Activated T-helper 1 cell treated with anti-CD3 and anti-CD28 coated beads, Interleukin-12 subunit alpha, Interleukin-12 subunit beta, Interleukin-2, Interleukin-4 antibody, amounts not matched to agents 30 ng/mL and 10 ng/mL and 1 ng/mL, durations not matched to agents 14 hours and 24 hours and 36 hours (primary cell): ENCODE measurements at regions of chr13 and their contacts with region 1.

Region 1: GRCh38 chr13:29850224-29850898 is at the start of gene UBL3:
- DNase-seq: peak; percentile 90
- H3K4me3 Mint-ChIP-seq: peak within 1 kb of the TSS; percentile 97
- H3K27ac Mint-ChIP-seq: peak within 1 kb of the TSS; percentile 98
- H3K4me1 Mint-ChIP-seq: peaks cover 50% of the 10 kb centered on the region
- H3K27me3 Mint-ChIP-seq: no peaks in the 10 kb centered on the region
- total RNA-seq, gene UBL3: 10.9 and 12.8 TPM in 2 replicates

Region 2: DNA sequence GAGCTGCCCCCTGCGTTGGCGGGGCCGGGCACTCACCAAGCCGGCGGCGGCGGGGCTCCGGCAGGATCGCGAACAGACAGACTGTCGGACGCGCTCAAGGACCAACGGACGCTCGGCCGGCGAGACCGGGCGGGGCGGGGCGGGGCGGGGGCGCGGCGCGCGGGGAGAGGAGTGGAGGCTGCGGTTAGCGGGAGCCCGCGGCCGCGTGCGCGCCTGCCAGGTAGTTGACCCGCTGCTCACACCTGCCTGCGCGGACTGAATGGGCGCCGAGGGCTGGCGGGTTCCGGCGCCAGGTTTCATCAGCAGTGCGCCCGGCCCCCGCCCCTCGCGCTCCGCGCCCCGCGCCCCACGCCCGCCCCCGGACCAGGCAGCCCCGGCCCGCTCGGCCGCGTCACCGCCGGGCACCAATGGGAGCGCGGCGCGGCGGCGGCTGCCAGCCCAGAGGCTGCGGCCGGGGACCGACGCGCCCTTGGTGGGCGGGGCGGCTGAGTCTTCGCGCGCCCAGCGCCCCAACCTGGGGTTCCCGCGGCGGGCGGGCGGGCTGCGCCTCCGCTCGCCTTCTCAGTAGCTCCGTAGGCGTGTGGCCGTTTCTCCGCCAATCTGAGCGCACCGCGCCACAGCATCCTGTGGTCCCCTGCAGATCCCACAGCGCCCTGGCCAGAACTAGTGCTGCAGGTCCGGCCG is 254.8 kb before region 1 on chr13 and contains the start of gene SLC7A1:
- intact Hi-C with region 1: loop called (anchors 1 kb)
- DNase-seq: peak; percentile 88
- H3K4me3 Mint-ChIP-seq: peak within 1 kb of the TSS; percentile 95
- H3K27ac Mint-ChIP-seq: peak within 1 kb of the TSS; percentile 95
- H3K4me1 Mint-ChIP-seq: peaks cover 51% of the 10 kb centered on the region
- H3K27me3 Mint-ChIP-seq: peaks cover 6% of the 10 kb centered on the region
- total RNA-seq, gene SLC7A1: 128 and 138 TPM in 2 replicates

Region 3: GRCh38 chr13:29830000-29830399 is 20.4 kb before region 1 on chr13:
- intact Hi-C with region 1: loop called (anchors 1 kb)
- DNase-seq: no peak
- H3K4me3 Mint-ChIP-seq: no peak overlapping the region
- H3K27ac Mint-ChIP-seq: no peak overlapping the region
- H3K4me1 Mint-ChIP-seq: peaks cover 17% of the 10 kb centered on the region
- H3K27me3 Mint-ChIP-seq: no peaks in the 10 kb centered on the region

Region 4: GRCh38 chr13:30045916-30046704 is 195.7 kb after region 1 on chr13:
- intact Hi-C with region 1: loop called (anchors 2 kb)
- DNase-seq: no peak
- H3K4me3 Mint-ChIP-seq: no peak overlapping the region
- H3K27ac Mint-ChIP-seq: peak overlapping the region; percentile 25
- H3K4me1 Mint-ChIP-seq: peaks cover 23% of the 10 kb centered on the region
- H3K27me3 Mint-ChIP-seq: peaks cover under 1% of the 10 kb centered on the region

Region 5: DNA sequence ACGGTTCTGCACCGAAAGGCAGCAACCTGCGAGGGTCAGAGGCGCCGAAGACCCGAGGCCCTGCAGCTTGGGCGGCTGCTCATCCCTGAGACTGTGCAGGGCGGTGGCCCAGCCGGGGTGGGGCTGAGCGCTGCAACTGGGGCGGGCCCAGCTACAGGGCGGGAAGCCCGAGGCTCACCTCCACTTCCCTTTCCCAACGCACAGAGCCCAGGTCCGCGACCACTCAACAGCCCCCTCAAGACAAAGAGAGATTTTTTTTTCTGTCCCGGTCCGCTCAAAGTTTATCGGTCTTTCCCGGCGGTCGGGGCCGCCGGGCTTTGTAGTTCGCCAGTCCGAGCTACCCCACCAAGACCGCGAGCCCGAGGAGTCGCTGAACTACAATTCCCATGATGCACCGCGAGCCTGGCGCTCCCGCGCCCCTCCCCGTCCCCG is 456.4 kb after region 1 on chr13:
- intact Hi-C with region 1: loop called (anchors 1 kb)
- DNase-seq: peak; percentile 90
- H3K4me3 Mint-ChIP-seq: peak overlapping the region; percentile 88
- H3K27ac Mint-ChIP-seq: peak overlapping the region; percentile 84
- H3K4me1 Mint-ChIP-seq: peaks cover 65% of the 10 kb centered on the region
- H3K27me3 Mint-ChIP-seq: no peaks in the 10 kb centered on the region

Region 6: GRCh38 chr13:30504081-30504480 is 653.7 kb after region 1 on chr13:
- intact Hi-C with region 1: no loop called
- DNase-seq: no peak
- H3K4me3 Mint-ChIP-seq: no peak overlapping the region
- H3K27ac Mint-ChIP-seq: no peak overlapping the region
- H3K4me1 Mint-ChIP-seq: peaks cover 17% of the 10 kb centered on the region
- H3K27me3 Mint-ChIP-seq: no peaks in the 10 kb centered on the region

Region 7: GRCh38 chr13:31161828-31162590 is 1311.6 kb after region 1 on chr13 and contains the start of gene HSPH1:
- intact Hi-C with region 1: loop called (anchors 2 kb)
- DNase-seq: peak; percentile 99
- H3K4me3 Mint-ChIP-seq: peak within 1 kb of the TSS; percentile 98
- H3K27ac Mint-ChIP-seq: peak within 1 kb of the TSS; percentile 96
- H3K4me1 Mint-ChIP-seq: peaks cover 44% of the 10 kb centered on the region
- H3K27me3 Mint-ChIP-seq: no peaks in the 10 kb centered on the region
- total RNA-seq, gene HSPH1: 310 and 326 TPM in 2 replicates